Heart right ventricle (tissue), 16 donors: ENCODE measurements at regions of chr3 and their contacts with region 1.

Region 1: GRCh38 chr3:189766437-189766836 is 135.2 kb downstream of the TP63 start:
- DNase-seq: no peak
- ATAC-seq: no peak
- H3K4me3 ChIP-seq: no peak overlapping the region
- H3K27ac ChIP-seq: no peak overlapping the region
- H3K4me1 ChIP-seq: no peaks in the 10 kb centered on the region
- H3K27me3 ChIP-seq: no peaks in the 10 kb centered on the region
- CTCF ChIP-seq: no peak

Region 2: DNA sequence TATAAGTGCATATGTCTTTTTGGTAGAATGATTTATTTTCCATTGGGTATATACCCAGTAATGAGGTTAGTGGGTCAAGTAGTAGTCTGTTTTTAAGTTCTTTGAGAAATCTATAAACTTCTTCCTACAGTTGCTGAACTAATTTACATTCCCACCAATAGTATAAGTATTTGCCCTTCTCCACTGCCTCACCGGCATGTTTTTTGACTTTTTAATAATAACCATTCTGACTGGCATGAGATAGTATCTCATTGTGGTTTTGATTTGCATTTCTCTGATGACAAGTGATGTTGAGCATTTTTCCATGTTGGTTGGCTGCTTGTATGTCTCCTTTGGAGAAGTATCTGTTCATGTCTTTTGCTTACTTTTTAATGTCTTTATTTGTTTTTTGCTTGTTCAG is 229.3 kb before region 1 on chr3:
- intact Hi-C with region 1: no loop called
- DNase-seq: no peak
- ATAC-seq: no peak
- H3K4me3 ChIP-seq: no peak overlapping the region
- H3K27ac ChIP-seq: no peak overlapping the region
- H3K4me1 ChIP-seq: no peaks in the 10 kb centered on the region
- H3K27me3 ChIP-seq: no peaks in the 10 kb centered on the region
- CTCF ChIP-seq: no peak

Region 3: DNA sequence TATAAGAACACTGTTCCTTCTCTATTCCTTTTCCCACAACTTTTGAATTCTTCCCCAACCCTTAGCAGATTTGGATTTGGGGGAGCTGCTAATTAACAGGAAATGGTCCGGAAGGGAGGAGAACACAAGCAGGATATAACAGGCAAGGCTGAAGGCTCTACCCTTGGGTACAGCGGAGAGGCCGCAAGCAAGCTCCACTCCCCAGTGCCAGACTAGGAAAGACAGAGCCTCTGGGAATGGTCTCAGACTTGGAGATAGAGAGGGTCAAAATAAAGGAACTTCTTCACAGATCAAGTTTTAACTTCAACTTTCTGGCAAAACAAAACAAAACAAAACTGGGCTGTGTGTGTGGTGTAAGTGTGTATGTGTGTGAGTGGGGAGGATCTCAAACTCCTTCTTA is 25.7 kb after region 1 on chr3:
- intact Hi-C with region 1: loop called in 1 of 10 experiments (anchors 2 kb)
- DNase-seq: no peak
- ATAC-seq: no peak
- H3K4me3 ChIP-seq: no peak overlapping the region
- H3K27ac ChIP-seq: peak overlapping the region in 2 of 10 donors; percentile 1 to 16
- H3K4me1 ChIP-seq: peaks cover 0 to 5% (median 0%) of the 10 kb centered on the region in 9 donors
- H3K27me3 ChIP-seq: no peaks in the 10 kb centered on the region
- CTCF ChIP-seq: no peak